GM13976 (cell line): ENCODE measurements at regions of chr9 and their contacts with region 1.

Region 1: DNA sequence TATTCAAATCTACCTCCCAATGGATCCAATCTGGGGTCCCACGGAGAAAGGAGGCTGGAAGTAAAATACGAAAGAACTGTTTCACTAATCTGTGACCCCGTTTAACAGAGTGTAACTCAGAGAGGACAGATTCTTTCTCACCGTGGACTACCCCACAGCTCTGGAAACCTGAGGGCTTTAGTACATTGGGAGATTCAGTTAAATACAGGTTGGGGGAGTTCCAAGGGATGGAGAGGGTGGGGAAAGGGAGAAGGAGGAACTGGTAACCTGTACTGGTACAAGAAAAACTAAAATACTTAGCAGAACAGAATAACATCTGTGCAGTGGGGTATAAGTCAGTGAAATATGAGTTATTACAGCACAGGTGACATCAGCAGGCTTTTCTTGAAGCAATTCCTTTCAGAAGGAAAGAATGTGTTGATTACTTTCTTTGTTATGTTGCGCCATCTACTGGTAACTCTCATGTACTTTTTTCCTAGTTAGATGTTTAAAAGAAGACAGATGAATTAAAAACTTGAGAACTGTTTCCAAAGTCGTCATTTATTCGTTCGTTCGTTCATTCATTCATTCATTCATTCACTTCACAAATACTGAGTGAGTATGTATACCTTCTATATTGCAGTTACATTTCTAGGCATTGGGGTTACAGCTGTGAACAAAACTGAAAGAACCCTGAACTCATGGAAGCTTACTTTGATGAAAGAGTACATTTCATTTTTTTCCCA is 30.0 kb upstream of the STOM start:
- DNase-seq: peak; percentile 38
- CTCF ChIP-seq: peak; percentile 47

Region 2: GRCh38 chr9:120755827-120756434 is 644.1 kb before region 1 on chr9:
- in situ Hi-C with region 1: loop called (anchors 25 kb)
- DNase-seq: peak; percentile 75
- CTCF ChIP-seq: peak; percentile 60

Region 3: DNA sequence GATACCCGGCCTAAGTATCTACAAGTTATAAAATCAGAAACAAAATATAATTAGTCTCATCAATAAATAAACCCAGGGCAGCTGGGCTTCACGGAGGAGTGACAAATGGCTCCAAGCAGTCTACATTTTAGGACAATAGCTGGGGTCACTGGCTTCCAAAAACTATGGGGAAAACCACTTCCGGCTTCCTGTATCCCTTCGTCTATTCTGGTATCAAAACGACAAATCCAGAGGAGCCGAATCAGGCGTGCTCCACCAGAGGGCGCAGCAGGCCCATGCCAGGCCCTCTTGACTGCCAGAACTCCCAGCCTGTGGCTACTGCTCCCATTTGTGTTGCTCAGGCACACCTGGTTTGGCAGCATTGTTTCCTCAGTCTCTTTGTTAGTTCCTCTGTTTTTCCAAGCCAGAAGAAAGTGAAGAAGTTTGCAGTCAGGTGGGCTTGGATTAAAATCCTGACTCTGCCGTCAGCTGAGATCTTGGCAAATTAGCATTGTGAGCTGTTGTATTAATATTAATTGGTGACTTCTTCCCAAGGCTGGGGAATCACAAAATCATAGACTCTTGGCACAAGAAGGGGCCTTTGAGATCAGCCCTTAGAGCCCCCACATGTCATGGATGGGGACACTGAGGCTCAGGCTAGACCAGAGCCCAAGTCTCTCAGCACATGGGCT is 186.8 kb before region 1 on chr9:
- in situ Hi-C with region 1: loop called (anchors 10 kb)
- DNase-seq: peak; percentile 68
- CTCF ChIP-seq: peak; percentile 83

Region 4: GRCh38 chr9:121286973-121287741 is 112.9 kb before region 1 on chr9:
- in situ Hi-C with region 1: no loop called
- DNase-seq: no peak
- CTCF ChIP-seq: no peak

Region 5: GRCh38 chr9:121317742-121318489 is 82.1 kb before region 1 on chr9:
- in situ Hi-C with region 1: loop called (anchors 5 kb)
- DNase-seq: no peak
- CTCF ChIP-seq: no peak